ENCODE measurements at regions of chr5 and their contacts with region 1.

Region 1: DNA sequence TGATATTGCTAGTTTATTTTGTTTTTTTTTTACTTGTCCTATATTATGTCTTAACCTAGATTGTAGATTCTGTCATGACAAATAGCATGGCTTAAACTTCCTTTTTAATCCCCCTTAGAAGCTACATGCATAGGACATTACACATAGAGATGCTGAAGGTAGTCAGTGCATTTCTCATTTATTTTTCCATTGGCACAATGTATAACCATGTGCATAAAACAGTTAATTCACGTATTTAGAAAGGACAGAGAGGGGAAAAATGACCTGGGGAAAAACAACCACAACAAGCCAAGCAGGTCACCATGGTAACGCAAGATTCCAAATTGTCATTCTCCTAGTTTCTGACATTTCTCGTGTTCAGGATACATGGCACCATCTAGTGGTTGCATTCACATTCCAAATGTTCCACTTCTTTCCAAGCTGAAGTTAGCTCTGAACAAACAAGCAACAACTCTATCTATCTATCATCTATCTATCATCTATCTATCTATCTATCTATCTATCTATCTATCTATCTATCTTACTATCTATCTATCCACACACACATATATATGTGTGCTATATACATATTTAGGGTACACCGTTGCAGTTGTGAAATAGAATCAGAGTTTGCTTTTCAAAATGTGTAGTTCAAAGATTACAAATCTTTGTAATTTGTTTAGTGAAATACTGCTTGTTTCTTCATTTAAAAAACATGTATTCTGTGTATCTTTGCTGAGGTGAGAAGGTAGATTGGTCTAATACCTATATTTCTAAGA is 487.2 kb upstream of the ST8SIA4 start:
- DNase-seq: no peak
- H3K4me3 ChIP-seq: no peak overlapping the region
- CTCF ChIP-seq: peak; percentile 45

Region 2: GRCh38 chr5:100430268-100431195 is 959.8 kb before region 1 on chr5:
- CTCF ChIA-PET with region 1: interaction called, 11 read pairs
- POLR2A ChIA-PET with region 1: no interaction called
- DNase-seq: no peak
- H3K4me3 ChIP-seq: no peak overlapping the region
- CTCF ChIP-seq: peak; percentile 78

Region 3: DNA sequence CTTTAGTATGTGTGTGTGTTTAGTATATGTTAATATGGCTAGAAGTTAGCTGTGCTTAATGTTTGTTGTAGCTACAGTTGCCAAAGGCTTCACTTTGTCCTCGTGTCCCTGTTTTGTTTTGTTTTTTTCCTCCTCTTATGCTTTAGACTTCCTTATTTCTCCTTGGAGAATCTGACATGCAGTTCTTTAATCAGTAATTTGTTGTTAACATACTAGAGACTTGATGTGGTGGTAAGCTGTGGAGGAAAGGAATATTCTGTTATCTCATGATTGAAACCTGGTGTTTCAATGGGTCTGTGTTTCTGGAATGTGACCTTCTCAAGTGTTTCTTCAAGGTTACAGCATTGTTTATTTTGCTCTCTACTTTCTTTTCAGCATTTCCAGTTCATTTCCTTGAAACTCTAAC is 28.4 kb after region 1 on chr5:
- CTCF ChIA-PET with region 1: no interaction called
- POLR2A ChIA-PET with region 1: no interaction called
- DNase-seq: no peak
- H3K4me3 ChIP-seq: no peak overlapping the region
- CTCF ChIP-seq: no peak

Measured in AG04449 (cell line).